Mucosa of descending colon (tissue), 3 donors: ENCODE measurements at regions of chr13 and their contacts with region 1.

Region 1: DNA sequence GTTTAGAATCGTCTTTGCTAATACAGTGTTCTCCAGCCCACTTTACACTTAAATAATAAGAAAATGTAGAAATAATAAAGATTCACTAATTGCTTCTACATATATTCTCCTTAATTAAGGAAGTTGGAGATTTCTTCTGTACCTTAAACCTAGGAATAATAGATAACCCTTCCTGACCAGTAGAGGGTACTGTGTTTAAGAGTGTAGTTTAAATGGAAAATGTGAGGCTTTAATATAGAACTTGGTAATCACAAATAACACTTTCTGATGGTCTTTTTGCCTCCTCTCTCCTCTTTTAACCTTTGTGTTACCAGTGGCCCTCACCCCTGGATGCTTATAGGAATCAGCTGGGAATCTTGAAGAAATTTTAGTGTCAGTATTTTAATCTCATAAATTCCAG is 20.7 kb downstream of the POMP start:
- DNase-seq: no peak
- ATAC-seq: peak; percentile 53
- H3K4me3 ChIP-seq: no peak overlapping the region
- H3K4me1 ChIP-seq: no peaks in the 10 kb centered on the region
- CTCF ChIP-seq: no peak

Region 2: DNA sequence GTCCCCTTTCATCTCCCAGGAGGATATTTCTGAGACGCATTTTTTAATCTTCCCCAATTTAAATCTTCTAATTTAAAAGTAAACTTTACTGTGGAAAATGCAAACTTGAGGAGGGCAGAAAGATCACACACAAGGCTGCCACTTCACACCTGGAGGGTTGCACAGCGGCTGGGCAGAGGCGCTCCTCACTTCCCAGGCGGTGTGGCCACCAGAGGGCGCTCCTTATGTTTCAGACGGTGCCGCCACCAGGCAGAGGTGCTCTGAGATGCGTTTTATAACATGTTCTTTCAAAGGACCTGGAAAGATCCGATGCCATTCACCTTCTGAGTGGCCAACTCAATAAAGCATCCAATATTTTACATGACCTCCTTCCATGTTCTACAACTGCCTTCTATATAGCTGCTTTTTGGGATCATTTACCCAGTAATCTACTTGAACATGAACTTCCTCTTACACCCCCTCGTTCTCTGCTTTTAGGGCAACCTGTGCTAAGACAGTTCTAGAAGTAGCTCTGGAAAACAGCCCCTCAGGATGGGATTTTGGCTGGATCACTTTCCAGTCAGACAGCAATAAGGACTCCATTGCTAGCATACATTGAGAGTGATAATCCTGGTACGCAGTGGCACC is 125.7 kb after region 1 on chr13:
- intact Hi-C with region 1: loop called in 1 of 2 experiments (anchors 10 kb)
- DNase-seq: no peak
- ATAC-seq: no peak
- H3K4me3 ChIP-seq: no peak overlapping the region
- H3K4me1 ChIP-seq: no peaks in the 10 kb centered on the region
- CTCF ChIP-seq: no peak

Region 3: GRCh38 chr13:29284726-29285125 is 605.1 kb after region 1 on chr13:
- intact Hi-C with region 1: no loop called
- DNase-seq: no peak
- ATAC-seq: no peak
- H3K4me3 ChIP-seq: no peak overlapping the region
- H3K4me1 ChIP-seq: no peaks in the 10 kb centered on the region
- CTCF ChIP-seq: no peak